HepG2 (cell line): ENCODE measurements at regions of chr16 and their contacts with region 1.

Region 1: DNA sequence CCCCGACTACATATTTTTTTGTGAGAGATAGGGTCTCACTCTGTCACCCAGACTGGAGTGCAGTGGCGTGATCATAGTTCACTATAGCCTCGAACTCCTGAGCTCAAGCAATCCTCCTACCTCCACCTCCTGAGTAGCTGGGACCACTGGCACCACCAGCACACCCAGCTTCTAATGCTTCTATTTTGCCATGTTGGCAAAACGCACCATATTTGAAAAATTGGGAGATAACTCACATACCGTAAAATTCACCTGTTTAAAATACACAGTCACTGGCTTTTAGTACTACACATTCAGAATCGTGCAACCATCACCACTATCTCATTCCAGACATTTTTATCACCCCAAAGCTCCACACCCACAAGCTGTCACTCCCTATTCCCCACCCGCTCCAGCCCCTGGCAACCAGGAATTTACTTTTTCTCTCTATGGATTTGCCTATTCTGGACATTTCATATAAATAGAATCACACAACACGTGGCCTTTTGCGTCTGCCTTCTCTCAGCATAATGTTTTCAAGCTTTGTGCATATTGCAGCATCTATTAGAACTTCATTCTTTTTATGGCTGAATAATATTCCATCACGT is 25.0 kb downstream of the PPL start:
- DNase-seq: peak; percentile 32
- ATAC-seq: no peak
- H3K4me3 ChIP-seq: no peak overlapping the region
- H3K27ac ChIP-seq: no peak overlapping the region
- H3K4me1 ChIP-seq: peaks cover 58% of the 10 kb centered on the region
- H3K27me3 ChIP-seq: no peaks in the 10 kb centered on the region
- CTCF ChIP-seq: no peak
- EP300 ChIP-seq: no peak
- POLR2A ChIP-seq: no peak
- RAD21 ChIP-seq: no peak

Region 2: DNA sequence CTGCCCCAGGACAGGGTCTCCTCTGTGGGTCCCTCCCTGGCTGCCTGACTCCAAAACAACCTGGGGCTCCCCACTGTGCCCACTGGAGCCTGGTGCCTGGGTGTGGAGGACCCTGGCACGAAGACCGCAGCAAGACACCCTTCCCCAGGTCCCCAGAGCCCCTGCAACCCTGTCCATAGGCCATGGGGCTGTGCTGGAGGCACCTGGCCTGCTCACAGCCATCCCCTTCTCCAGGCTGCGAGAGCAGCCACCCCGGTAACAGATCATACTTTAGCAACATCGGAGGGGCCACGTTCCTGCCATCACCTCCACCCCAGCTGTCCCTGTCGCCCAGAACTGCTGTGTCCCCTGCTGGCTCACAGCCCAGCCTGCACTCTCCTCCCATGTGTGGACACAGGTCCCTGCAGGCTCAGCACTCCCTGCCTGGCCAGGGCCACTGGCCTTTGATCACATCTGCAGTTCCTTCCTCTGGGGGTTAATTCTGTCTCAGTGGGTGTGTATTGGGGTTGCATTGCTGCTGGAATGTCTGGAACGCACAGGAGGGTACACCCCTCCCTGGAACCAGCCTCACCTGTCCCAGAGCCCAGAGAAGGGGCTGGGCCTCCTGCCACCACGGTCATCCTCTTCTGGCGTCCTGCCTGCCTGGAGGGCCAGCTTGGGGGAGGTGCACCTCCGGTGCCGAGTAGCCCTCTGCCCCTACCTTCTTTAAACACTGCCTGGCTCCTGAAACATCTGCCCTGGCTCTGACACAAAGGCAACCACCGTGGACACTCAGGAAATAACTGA is 12.9 kb after region 1 on chr16:
- CTCF ChIA-PET with region 1: no interaction called
- POLR2A ChIA-PET with region 1: no interaction called
- in situ Hi-C with region 1: no loop called
- intact Hi-C with region 1: no loop called
- DNase-seq: peak; percentile 84
- ATAC-seq: peak; percentile 98
- H3K4me3 ChIP-seq: peak overlapping the region in 1 of 3 experiments; percentile 56; a peak in 2 of 6 replicates
- H3K27ac ChIP-seq: peak overlapping the region; percentile 5
- H3K4me1 ChIP-seq: peaks cover 19% of the 10 kb centered on the region
- H3K27me3 ChIP-seq: no peaks in the 10 kb centered on the region
- CTCF ChIP-seq: peak; percentile 79
- EP300 ChIP-seq: 0 out of 4 replicates have a peak, but pooled peaks of 1 of the 2 experiments have one; percentile 8
- POLR2A ChIP-seq: no peak
- RAD21 ChIP-seq: peak; percentile 67; the same call in 1 of the 2 replicates

Region 3: DNA sequence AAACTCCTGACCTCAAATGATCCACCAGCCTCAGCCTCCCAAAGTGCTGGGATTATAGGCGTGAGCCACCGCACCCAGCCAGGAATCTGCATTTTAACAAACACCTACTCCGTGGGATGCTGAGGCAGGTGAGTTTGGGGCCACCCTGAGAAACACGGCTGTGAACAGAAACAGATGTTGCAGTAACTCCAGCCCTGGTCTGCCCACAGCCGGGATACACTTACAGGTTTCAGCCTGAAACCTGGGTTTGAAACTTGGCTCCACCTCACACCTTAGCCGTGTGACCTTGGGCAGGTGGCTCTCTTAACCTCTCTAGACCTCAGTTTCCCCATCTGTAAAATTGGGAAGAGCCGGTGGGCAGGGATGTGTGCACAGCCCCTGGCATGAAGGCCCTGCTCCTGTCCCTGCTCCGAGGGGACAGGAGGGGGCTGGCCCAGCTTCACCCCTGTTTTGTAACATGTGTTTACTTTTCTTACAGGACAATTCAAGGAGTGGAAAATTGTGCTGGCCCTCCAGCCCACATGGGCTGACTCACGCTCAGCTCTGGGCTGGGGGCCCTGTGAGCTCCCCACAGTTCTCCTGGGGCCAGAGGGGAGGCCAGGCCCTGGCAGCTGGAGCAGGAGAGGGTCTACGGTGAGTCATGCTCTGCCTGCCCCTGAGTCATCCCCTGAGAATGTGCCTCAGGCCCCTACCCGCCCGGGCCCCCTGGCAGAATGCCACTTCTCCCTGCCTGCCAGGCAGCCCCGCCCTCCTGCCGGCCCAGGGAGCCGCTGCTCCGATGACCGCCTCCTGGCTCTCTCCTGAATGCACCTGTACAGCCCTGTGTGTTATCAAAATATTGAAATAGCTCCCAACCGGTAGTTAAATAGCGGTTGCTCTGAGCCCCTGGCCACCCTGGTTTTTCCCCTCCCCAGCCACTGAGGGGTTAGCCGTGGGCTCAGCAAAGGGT is 32.7 kb after region 1 on chr16:
- CTCF ChIA-PET with region 1: no interaction called
- POLR2A ChIA-PET with region 1: interaction called, 6 read pairs
- in situ Hi-C with region 1: no loop called
- intact Hi-C with region 1: loop called (anchors 5 kb)
- DNase-seq: peak; percentile 98
- ATAC-seq: peak; percentile 82
- H3K4me3 ChIP-seq: peak overlapping the region; percentile 9 to 63 (median 15); a peak in 4 of 6 replicates
- H3K27ac ChIP-seq: peak overlapping the region; percentile 62
- H3K4me1 ChIP-seq: peaks cover 91% of the 10 kb centered on the region
- H3K27me3 ChIP-seq: no peaks in the 10 kb centered on the region; a peak in 1 of 5 replicates
- CTCF ChIP-seq: peak; percentile 12; the same call in 1 of the 2 replicates
- EP300 ChIP-seq: peak; percentile 80 to 84
- POLR2A ChIP-seq: peak in 1 of 2 experiments; percentile 56; a peak in 2 of 4 replicates
- RAD21 ChIP-seq: peak; percentile 62

Region 4: DNA sequence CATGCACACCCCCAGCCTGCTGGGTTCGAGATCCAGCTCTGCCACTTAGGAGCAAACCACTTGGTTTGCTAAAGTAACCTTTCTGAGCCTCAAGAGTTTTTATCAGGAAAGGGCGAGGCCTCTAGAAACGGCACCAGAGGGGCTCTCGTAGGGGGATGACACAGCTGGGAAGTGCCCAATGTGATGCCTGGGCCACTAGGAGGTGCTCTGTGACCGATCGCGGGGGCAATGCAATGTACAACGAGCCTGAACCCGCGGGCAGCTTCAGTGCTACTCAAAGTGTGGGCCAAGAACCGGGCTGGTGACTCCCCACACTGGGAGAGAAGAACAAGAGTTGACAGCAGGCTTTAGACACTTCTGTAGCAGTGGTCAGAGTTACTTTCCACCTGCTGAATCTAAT is 144.4 kb after region 1 on chr16:
- CTCF ChIA-PET with region 1: no interaction called
- POLR2A ChIA-PET with region 1: no interaction called
- in situ Hi-C with region 1: no loop called
- intact Hi-C with region 1: no loop called
- DNase-seq: peak; percentile 65
- ATAC-seq: peak; percentile 89
- H3K4me3 ChIP-seq: no peak overlapping the region
- H3K27ac ChIP-seq: no peak overlapping the region
- H3K4me1 ChIP-seq: 0 out of 2 replicates have a peak, but pooled peaks cover 5% of the 10 kb centered on the region
- H3K27me3 ChIP-seq: peaks cover 0 to 2% of the 10 kb centered on the region in 2 experiments; a peak in 1 of 5 replicates
- CTCF ChIP-seq: peak; percentile 90
- EP300 ChIP-seq: no peak
- POLR2A ChIP-seq: no peak
- RAD21 ChIP-seq: peak; percentile 87